Body of pancreas (tissue), 4 donors: ENCODE measurements at regions of chr16 and their contacts with region 1.

Region 1: GRCh38 chr16:2874912-2875362 is 8.1 kb upstream of the FLYWCH2 start:
- DNase-seq: peak; percentile 80 to 85 (median 83)
- ATAC-seq: peak; percentile 99
- H3K4me3 ChIP-seq: no peak overlapping the region
- H3K27ac ChIP-seq: no peak overlapping the region
- H3K4me1 ChIP-seq: peaks cover 4% of the 10 kb centered on the region
- H3K27me3 ChIP-seq: no peaks in the 10 kb centered on the region
- CTCF ChIP-seq: peak; percentile 91 to 99 (median 97)
- POLR2A ChIP-seq: no peak

Region 2: GRCh38 chr16:2911580-2912329 is 36.8 kb after region 1 on chr16 and contains the start of gene FLYWCH1:
- intact Hi-C with region 1: loop called (anchors 5 kb)
- DNase-seq: peak; percentile 98 to 99 (median 99)
- ATAC-seq: peak; percentile 97
- H3K4me3 ChIP-seq: peak within 1 kb of the TSS; percentile 58 to 63
- H3K27ac ChIP-seq: peak within 1 kb of the TSS; percentile 51 to 81 (median 63)
- H3K4me1 ChIP-seq: peaks cover 24% of the 10 kb centered on the region
- H3K27me3 ChIP-seq: no peaks in the 10 kb centered on the region
- CTCF ChIP-seq: peak in 1 of 7 experiments; percentile 30
- POLR2A ChIP-seq: peak; percentile 35 to 47 (median 40)
- total RNA-seq, gene FLYWCH1: 24.6 to 53.7 TPM